ENCODE measurements at regions of chr5 and their contacts with region 1.

Region 1: GRCh38 chr5:132777209-132778069 is at the start of gene SEPTIN8:
- DNase-seq: peak in 7 of 10 donors; percentile 50 to 85 (median 67)
- H3K4me3 ChIP-seq: peak within 1 kb of the TSS; percentile 64 to 97 (median 87)
- H3K27ac ChIP-seq: peak within 1 kb of the TSS; percentile 91 to 100 (median 98)
- H3K27me3 ChIP-seq: no peaks in the 10 kb centered on the region
- CTCF ChIP-seq: peak in 5 of 56 donors; percentile 6 to 35 (median 16)
- total RNA-seq, gene SEPTIN8: 221 to 622 (median 319) TPM

Region 2: DNA sequence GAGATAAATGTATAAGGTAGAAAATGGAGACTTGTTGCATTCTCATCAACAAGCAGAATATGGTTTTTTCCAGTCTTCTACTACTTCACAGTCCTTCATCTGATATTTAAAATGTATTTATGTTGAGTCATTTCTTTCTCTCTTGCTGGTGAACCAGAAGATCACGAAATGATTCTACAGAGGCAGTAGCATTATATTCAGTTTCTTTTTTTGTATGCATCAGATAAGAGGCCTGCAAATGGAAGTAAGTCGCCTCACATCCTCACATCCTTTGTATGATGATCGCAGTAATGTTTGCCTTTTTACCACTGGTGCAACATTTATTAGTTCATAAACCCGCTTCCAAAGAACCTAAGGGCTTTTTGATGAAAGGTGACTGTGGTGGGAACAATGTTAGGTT is 141.6 kb before region 1 on chr5:
- intact Hi-C with region 1: no loop called
- DNase-seq: no peak
- H3K4me3 ChIP-seq: no peak overlapping the region
- H3K27ac ChIP-seq: no peak overlapping the region
- H3K27me3 ChIP-seq: no peaks in the 10 kb centered on the region
- CTCF ChIP-seq: no peak

Region 3: GRCh38 chr5:132797651-132798050 is 20.2 kb after region 1 on chr5:
- intact Hi-C with region 1: loop called in 1 of 2 experiments (anchors 2 kb)
- DNase-seq: peak in 6 of 10 donors; percentile 47 to 79 (median 62)
- H3K4me3 ChIP-seq: peak overlapping the region in 4 of 59 donors; percentile 0 to 28 (median 10)
- H3K27ac ChIP-seq: peak overlapping the region; percentile 71 to 100 (median 95)
- H3K27me3 ChIP-seq: no peaks in the 10 kb centered on the region
- CTCF ChIP-seq: peak in 1 of 56 donors; percentile 21

Region 4: GRCh38 chr5:132813599-132814502 is 36.4 kb after region 1 on chr5:
- intact Hi-C with region 1: loop called (anchors 2 to 5 kb)
- DNase-seq: peak in 6 of 10 donors; percentile 44 to 81 (median 70)
- H3K4me3 ChIP-seq: peak overlapping the region; percentile 45 to 78 (median 66)
- H3K27ac ChIP-seq: peak overlapping the region; percentile 23 to 100 (median 95)
- H3K27me3 ChIP-seq: peaks cover 0 to 4% (median 0%) of the 10 kb centered on the region in 45 donors
- CTCF ChIP-seq: peak in 15 of 56 donors; percentile 9 to 34 (median 21)

Measured in dorsolateral prefrontal cortex (tissue), 120 donors.